A673 (cell line): ENCODE measurements at regions of chr4 and their contacts with region 1.

Region 1: DNA sequence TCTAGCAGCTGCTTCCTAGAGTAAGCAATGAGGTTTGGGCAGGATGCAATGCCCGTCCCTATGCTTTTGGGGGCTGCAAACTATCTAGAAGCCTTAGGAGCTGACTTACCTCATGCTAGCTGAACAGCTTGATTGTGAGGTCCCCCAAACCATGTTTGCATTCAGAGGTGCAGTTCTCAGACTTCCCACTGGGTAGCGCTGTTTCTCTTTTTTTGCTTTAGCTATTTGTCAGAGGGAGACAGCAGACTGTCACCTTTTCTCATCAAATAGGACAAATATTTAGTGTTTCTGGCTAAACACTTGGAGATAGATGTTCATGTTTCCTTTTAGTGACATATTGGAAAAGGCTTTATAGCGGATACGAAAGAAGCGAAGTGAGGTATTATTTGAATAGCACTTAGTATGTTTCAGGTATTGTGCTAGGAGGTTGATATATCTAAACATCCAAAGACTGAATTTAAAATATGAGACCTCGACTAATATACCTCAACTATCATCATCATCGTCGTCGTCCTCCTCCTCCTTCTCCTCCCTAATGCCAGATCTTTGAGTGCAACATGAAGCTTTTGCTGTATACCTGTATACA is 18.7 kb upstream of the TMEM192 start:
- DNase-seq: peak; percentile 77
- H3K4me3 ChIP-seq: no peak overlapping the region
- H3K27ac ChIP-seq: no peak overlapping the region
- H3K4me1 ChIP-seq: no peaks in the 10 kb centered on the region
- H3K27me3 ChIP-seq: no peaks in the 10 kb centered on the region
- CTCF ChIP-seq: peak; percentile 89

Region 2: DNA sequence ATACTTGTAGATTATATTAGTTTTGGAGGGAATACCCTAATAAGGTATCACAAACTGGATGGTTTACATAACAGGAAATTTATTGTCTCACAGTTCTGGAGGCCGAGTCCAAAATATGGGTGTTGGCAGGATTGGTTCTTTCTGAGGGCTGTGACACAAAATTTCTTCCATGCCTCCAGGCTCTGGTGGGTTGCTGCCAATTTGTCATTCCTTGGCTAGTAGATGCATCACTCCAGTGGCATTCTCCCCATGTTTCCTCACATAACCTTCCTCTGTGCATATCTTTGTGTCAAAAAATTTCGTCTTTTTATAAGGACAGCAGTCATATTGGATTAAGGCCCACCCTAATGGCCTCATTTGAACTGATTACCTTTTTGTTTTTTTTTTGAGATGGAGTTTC is 205.0 kb before region 1 on chr4:
- CTCF ChIA-PET with region 1: no interaction called
- POLR2A ChIA-PET with region 1: no interaction called
- intact Hi-C with region 1: no loop called
- DNase-seq: no peak
- H3K4me3 ChIP-seq: no peak overlapping the region
- H3K27ac ChIP-seq: no peak overlapping the region
- H3K4me1 ChIP-seq: no peaks in the 10 kb centered on the region
- H3K27me3 ChIP-seq: no peaks in the 10 kb centered on the region
- CTCF ChIP-seq: no peak

Region 3: DNA sequence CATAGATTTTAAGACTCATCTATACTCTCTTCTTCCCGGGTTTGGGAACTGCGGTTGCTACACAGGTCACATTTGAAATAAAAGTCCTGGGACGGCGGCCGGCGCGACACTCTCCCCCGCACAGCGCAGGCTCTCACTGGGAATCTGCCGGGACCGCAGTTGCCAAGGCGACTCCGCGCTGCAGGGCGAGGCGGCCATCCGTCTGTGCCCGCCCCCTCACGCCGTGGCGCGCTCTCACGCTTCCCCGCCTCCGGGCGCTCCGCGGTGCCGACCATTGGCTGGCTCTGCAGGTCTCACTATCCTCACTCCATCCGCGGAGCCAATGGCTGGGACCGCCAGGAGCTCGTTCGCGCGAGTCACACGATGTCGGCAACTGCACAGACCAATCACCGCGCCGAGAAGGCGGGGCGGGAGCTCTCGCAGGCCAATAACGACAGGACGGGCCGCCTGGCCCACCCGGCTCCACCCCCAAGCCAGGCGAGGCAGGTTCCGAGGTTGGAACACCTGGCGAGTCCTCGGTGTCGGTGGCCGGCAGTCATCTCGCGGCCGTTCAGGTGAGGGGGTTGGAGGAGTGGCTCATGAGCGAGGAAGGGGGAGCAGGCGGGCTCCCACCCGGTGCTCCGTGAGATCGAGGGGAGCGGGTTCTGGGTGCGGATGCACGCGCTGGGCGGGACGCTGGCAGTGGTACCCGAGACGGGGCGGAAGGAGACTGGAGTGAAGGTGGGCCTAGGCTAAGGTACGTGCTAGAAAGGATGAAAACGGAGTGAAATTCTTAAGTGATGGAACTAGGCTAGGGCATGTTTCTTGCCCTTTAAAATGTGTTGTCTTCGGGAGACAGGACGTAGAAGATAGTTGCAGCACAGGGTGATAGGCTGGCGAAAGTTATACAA is 196.1 kb after region 1 on chr4 and contains the start of gene MSMO1:
- CTCF ChIA-PET with region 1: no interaction called
- POLR2A ChIA-PET with region 1: no interaction called
- intact Hi-C with region 1: loop called (anchors 5 kb)
- DNase-seq: peak; percentile 100
- H3K4me3 ChIP-seq: peak within 1 kb of the TSS; percentile 71
- H3K27ac ChIP-seq: peak within 1 kb of the TSS; percentile 75
- H3K4me1 ChIP-seq: peaks cover 15% of the 10 kb centered on the region
- H3K27me3 ChIP-seq: no peaks in the 10 kb centered on the region
- CTCF ChIP-seq: no peak
- total RNA-seq, gene MSMO1: 104 and 137 TPM in 2 replicates

Region 4: GRCh38 chr4:165343353-165344191 is 212.2 kb after region 1 on chr4:
- CTCF ChIA-PET with region 1: interaction called, 5 read pairs
- POLR2A ChIA-PET with region 1: no interaction called
- intact Hi-C with region 1: loop called (anchors 2 kb)
- DNase-seq: no peak
- H3K4me3 ChIP-seq: no peak overlapping the region
- H3K27ac ChIP-seq: no peak overlapping the region
- H3K4me1 ChIP-seq: no peaks in the 10 kb centered on the region
- H3K27me3 ChIP-seq: no peaks in the 10 kb centered on the region
- CTCF ChIP-seq: peak; percentile 39; the same call in 1 of the 2 replicates

Region 5: DNA sequence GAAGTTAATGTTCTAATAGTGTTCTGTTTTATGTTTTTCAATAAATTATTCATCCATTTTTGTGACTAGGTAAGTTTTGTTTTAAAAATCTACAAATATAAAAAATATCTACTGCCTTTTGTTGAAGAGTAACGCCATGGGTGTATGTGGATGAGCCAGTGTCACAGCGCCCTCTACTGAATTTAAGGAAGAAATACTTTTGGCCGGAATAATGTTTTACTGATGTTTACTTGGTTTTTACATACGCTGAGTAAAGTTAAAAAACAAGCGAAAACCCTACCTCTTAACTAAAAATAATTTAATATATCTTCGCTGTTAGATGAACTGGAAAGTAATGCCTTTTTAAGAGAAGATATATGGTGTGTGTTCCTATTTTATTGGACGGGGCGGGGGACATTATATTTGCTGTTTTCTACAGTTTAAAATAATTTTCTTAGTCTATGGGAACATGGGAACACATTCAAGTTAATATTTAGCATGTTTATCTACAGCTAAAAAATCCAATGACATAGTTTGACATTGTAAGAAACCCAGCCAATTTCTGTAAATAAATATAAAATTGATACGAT is 333.6 kb after region 1 on chr4:
- CTCF ChIA-PET with region 1: interaction called, 5 read pairs
- POLR2A ChIA-PET with region 1: no interaction called
- intact Hi-C with region 1: loop called (anchors 1 kb)
- DNase-seq: peak; percentile 60
- H3K4me3 ChIP-seq: no peak overlapping the region
- H3K27ac ChIP-seq: no peak overlapping the region
- H3K4me1 ChIP-seq: no peaks in the 10 kb centered on the region
- H3K27me3 ChIP-seq: no peaks in the 10 kb centered on the region
- CTCF ChIP-seq: peak; percentile 89

Region 6: DNA sequence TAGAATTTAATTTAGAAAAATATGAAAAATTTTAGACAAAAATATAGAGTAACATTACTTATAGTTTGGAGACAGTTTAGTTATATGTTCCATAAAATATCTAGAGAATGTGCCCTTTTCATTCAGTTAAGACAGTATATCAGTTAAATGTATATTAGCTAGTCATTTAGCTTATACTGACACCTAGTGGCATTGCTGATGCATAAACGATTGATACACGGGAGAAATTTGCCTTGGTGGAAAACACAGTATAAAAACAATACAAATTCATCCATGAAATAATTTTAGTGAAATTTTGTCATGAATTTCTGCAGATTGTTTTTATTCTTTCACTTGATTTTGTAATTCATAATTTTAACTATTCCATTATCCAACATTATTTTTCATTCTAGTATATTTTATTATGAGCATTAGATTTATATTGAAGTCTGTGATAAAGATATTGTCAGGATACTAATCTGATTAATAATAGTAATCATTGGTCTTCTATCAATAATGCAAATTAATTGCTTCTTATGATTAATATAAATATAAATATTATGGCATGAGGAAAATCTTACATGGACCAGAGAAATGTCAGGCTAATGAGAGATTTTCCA is 960.7 kb after region 1 on chr4:
- CTCF ChIA-PET with region 1: interaction called, 4 read pairs
- POLR2A ChIA-PET with region 1: no interaction called
- intact Hi-C with region 1: loop called (anchors 5 kb)
- DNase-seq: peak; percentile 59
- H3K4me3 ChIP-seq: no peak overlapping the region
- H3K27ac ChIP-seq: no peak overlapping the region
- H3K4me1 ChIP-seq: peaks cover 10% of the 10 kb centered on the region
- H3K27me3 ChIP-seq: no peaks in the 10 kb centered on the region
- CTCF ChIP-seq: peak; percentile 80